H1 (cell line): ENCODE measurements at regions of chr1 and their contacts with region 1.

Region 1: DNA sequence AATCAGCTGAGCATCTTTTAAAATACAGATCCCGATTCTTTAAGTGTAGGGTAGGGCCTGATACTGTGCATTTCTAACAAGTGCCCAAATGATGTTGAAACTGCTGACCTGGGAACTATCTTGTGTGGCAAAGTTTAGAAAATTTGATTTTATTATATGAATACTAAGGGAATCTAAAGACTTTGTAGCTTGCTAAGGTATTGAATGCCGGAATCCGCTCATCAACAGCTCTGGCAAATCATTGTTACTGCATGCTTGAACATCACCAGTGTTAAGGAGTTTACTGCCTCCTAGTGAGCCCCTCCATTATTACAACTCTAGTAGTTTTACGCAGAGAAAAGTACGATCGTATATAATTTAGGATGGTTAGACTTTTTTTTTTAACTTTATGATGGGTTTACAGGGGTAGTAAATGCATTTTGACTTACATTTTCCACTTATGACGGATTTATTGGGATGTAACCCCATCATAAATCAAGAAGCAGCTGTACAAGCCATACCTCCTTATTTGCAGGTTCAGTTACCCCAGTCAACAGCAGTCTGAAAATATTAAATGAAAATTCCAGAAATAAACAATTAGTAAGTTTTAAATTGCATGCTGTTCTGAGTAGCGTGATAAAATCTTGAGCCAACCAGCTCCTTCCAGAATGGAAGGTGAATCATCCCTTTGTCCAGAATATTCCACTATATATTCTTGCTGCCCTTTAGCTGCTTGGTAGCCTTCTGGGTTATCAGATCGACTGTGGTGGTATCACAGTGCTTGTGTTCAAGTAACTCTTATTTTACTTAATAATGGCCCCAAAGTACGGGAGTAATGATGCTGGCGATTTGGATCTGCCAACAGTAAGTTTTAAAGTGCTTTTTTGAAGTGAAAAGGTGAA is 892 bp downstream of the TYW3 start:
- DNase-seq: no peak
- H3K4me3 ChIP-seq: peak overlapping the region; percentile 81 to 96 (median 84)
- H3K27ac ChIP-seq: peak overlapping the region; percentile 99; the same call in 1 of the 2 replicates
- H3K4me1 ChIP-seq: peaks cover 0 to 2% (median 0%) of the 10 kb centered on the region in 4 experiments; a peak in 2 of 7 replicates
- H3K27me3 ChIP-seq: no peaks in the 10 kb centered on the region; a peak in 1 of 7 replicates
- CTCF ChIP-seq: peak in 2 of 3 experiments; percentile 68 to 83; a peak in 3 of 4 replicates
- EP300 ChIP-seq: no peak
- POLR2A ChIP-seq: no peak
- RAD21 ChIP-seq: peak; percentile 55 to 70

Region 2: GRCh38 chr1:74455390-74455789 is 278.5 kb before region 1 on chr1:
- CTCF ChIA-PET with region 1: no interaction called
- POLR2A ChIA-PET with region 1: no interaction called
- DNase-seq: no peak
- H3K4me3 ChIP-seq: no peak overlapping the region
- H3K27ac ChIP-seq: no peak overlapping the region
- H3K4me1 ChIP-seq: no peaks in the 10 kb centered on the region
- H3K27me3 ChIP-seq: no peaks in the 10 kb centered on the region
- CTCF ChIP-seq: no peak
- EP300 ChIP-seq: no peak
- POLR2A ChIP-seq: no peak
- RAD21 ChIP-seq: no peak

Region 3: DNA sequence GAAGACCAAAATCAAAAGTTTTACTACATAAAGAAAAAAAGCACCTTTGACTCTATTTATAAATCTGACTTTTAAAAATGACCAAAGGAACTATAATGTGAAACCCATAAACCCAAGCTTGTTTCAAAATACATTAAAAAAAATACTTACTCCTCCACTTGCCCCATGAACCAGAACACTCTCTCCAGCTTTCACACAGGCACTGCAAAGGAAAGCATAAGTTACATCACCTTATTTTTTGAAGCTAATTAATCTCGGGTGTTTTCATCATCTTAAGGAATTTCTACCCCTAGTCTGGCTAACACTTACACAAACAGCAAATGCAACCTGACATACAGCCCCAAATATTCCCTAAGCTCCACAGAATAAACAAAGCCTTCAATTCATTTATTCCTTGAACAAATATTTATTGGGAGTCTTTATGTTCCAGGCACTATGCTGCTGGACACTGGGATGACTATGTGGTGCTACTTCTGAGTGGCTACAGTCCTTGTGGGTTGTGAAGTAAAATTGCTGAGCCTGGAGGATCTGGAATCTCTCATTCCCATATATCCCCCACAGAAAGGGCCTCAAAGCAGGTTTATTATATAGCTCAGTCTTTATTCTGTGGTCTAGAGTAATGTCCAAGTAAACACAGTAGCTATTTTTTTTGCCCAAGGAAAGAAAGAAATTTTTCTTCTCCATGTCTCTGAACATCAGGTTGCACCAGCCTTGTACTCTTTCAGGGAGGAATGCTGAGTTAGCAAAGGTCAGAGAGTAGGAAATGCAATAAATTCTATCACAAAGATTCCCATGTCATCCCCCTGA is 19.2 kb before region 1 on chr1:
- CTCF ChIA-PET with region 1: interaction called, 11 read pairs
- POLR2A ChIA-PET with region 1: interaction called, 5 read pairs
- DNase-seq: no peak
- H3K4me3 ChIP-seq: no peak overlapping the region
- H3K27ac ChIP-seq: no peak overlapping the region
- H3K4me1 ChIP-seq: no peaks in the 10 kb centered on the region
- H3K27me3 ChIP-seq: no peaks in the 10 kb centered on the region
- CTCF ChIP-seq: no peak
- EP300 ChIP-seq: no peak
- POLR2A ChIP-seq: no peak
- RAD21 ChIP-seq: no peak

Region 4: GRCh38 chr1:74748960-74749359 is 15.1 kb after region 1 on chr1:
- CTCF ChIA-PET with region 1: interaction called, 19 read pairs
- POLR2A ChIA-PET with region 1: interaction called, 3 read pairs
- DNase-seq: no peak
- H3K4me3 ChIP-seq: no peak overlapping the region
- H3K27ac ChIP-seq: no peak overlapping the region
- H3K4me1 ChIP-seq: peaks cover 0 to 2% (median 0%) of the 10 kb centered on the region in 4 experiments; a peak in 2 of 7 replicates
- H3K27me3 ChIP-seq: no peaks in the 10 kb centered on the region
- CTCF ChIP-seq: no peak
- EP300 ChIP-seq: no peak
- POLR2A ChIP-seq: no peak
- RAD21 ChIP-seq: no peak

Region 5: GRCh38 chr1:74811436-74812179 is 77.8 kb after region 1 on chr1:
- CTCF ChIA-PET with region 1: no interaction called
- POLR2A ChIA-PET with region 1: no interaction called
- DNase-seq: no peak
- H3K4me3 ChIP-seq: no peak overlapping the region
- H3K27ac ChIP-seq: no peak overlapping the region
- H3K4me1 ChIP-seq: no peaks in the 10 kb centered on the region
- H3K27me3 ChIP-seq: no peaks in the 10 kb centered on the region
- CTCF ChIP-seq: no peak
- EP300 ChIP-seq: no peak
- POLR2A ChIP-seq: no peak
- RAD21 ChIP-seq: no peak